ENCODE measurements at regions of chr10 and their contacts with region 1.

Region 1: GRCh38 chr10:21724695-21725367 is 190.8 kb downstream of the MLLT10 start:
- H3K4me3 ChIP-seq: no peak overlapping the region
- H3K27ac ChIP-seq: no peak overlapping the region
- H3K4me1 ChIP-seq: peaks cover 32% of the 10 kb centered on the region
- CTCF ChIP-seq: no peak

Region 2: DNA sequence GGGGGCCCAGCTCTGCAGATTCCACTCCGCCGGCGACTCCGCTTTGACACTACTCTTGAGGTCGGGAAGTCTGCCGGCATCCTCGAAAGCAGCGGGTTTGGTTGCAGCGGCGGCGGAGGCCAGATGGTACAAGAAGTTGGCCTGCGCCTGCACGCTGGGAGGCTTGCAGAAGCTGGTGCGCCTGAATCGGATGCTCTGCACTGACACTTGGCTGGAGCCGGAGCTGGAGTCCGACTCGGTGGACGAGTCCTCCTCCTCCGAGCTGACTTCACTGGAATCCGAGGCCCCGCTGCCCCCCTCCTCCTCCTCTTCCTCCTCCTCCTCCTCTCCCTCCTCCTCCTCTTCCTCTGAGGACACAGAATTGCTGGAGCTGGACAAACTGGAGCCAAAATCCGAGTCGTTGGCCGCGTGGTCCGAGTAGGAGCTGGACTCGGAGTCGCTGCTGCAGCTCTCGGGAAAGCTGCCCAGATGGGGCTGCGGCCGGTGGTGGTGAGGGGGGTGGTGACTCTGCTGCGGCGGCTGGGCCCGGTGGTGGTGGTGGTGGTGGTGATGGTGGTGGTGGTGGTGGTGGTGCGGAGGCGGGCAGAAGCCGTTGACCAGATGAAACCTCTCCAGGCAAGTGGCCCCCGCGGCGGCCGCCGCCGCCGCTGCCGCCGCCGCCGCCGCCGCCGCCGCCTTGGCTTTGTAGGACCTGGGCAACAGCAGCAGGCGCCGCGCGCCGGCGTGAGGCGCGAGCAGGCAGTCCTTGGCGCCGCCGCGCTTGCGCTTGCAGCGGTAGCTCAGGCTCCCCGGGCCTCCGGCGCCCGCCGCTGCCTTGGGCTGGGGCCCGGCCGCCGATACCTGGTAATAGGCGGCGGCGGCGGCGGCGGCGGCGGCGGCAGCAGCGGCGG is 208.3 kb before region 1 on chr10:
- CTCF ChIA-PET with region 1: interaction called, 3 read pairs
- POLR2A ChIA-PET with region 1: interaction called, 10 read pairs
- H3K4me3 ChIP-seq: peak overlapping the region; percentile 65
- H3K27ac ChIP-seq: peak overlapping the region; percentile 85
- H3K4me1 ChIP-seq: peaks cover 31% of the 10 kb centered on the region
- CTCF ChIP-seq: no peak

Region 3: GRCh38 chr10:21776883-21777282 is 52.1 kb after region 1 on chr10:
- CTCF ChIA-PET with region 1: no interaction called
- POLR2A ChIA-PET with region 1: no interaction called
- H3K4me3 ChIP-seq: no peak overlapping the region
- H3K27ac ChIP-seq: no peak overlapping the region
- H3K4me1 ChIP-seq: no peaks in the 10 kb centered on the region
- CTCF ChIP-seq: no peak

Measured in HEK293 (cell line).